Mucosa of descending colon (tissue), 3 donors: ENCODE measurements at regions of chr1 and their contacts with region 1.

Region 1: DNA sequence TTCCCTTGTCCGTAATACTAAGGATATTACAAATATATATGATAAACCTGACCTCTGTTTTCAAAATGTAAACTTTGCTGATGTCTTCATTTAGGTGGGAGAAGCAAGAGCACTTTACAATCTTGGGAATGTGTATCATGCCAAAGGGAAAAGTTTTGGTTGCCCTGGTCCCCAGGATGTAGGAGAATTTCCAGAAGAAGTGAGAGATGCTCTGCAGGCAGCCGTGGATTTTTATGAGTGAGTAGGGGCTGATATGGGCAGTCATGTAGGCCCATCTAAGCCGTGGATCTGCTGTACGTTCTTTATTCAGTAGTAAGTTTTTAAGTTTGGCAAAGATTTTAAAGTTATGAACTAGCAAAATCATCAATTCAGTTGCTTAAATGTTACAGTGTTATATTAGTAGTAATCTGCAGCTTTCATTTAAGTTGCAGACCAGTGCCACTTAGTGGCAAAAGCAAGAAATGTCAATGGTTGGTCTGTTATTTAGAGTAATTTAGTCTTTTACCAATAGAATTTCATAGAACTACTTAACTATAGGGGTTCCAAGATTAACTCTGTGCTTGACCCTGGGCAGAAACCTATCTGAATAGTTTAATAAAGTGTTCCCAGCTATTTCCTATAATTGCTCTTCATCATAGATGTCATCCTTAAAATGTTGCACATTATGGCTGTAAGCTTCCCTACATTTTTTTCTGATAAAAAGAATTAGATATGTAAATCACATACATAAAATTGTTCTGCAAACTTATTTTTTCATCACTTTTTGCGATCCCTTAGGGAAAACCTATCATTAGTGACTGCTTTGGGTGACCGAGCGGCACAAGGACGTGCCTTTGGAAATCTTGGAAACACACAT is 21.3 kb downstream of the GPSM2 start:
- DNase-seq: peak in 1 of 3 donors; percentile 66
- ATAC-seq: peak; percentile 66
- H3K4me3 ChIP-seq: no peak overlapping the region
- H3K4me1 ChIP-seq: no peaks in the 10 kb centered on the region
- CTCF ChIP-seq: peak; percentile 52

Region 2: DNA sequence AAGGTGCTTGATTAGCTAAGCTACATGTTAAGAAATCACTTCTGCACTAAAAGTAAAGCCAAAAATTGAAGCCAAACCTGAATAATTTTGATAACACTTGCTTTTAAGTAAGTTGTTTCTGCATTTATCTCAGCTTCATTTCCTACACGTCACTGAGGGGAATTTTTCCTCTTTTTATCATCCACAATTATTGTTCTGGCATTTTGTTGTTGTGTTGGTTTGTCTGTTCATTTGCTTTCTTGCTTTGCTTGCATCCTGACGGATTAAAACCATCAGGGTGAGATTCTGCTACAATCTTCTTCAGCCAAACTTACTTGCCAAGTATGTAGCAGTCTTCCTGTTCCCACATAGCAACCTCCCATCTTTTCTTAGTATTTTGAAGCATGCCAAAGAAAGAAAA is 356.2 kb before region 1 on chr1:
- intact Hi-C with region 1: loop called in 1 of 2 experiments (anchors 10 kb)
- DNase-seq: no peak
- ATAC-seq: no peak
- H3K4me3 ChIP-seq: no peak overlapping the region
- H3K4me1 ChIP-seq: no peaks in the 10 kb centered on the region
- CTCF ChIP-seq: no peak

Region 3: GRCh38 chr1:108828022-108828961 is 69.8 kb before region 1 on chr1:
- intact Hi-C with region 1: loop called (anchors 1 to 5 kb)
- DNase-seq: peak; percentile 56 to 90 (median 76)
- ATAC-seq: peak; percentile 77
- H3K4me3 ChIP-seq: no peak overlapping the region
- H3K4me1 ChIP-seq: peaks cover 6% of the 10 kb centered on the region
- CTCF ChIP-seq: peak; percentile 30

Region 4: GRCh38 chr1:108972951-108973350 is 74.9 kb after region 1 on chr1:
- intact Hi-C with region 1: no loop called
- DNase-seq: no peak
- ATAC-seq: no peak
- H3K4me3 ChIP-seq: no peak overlapping the region
- H3K4me1 ChIP-seq: no peaks in the 10 kb centered on the region
- CTCF ChIP-seq: no peak